Heart right ventricle (tissue), 16 donors: ENCODE measurements at regions of chr10 and their contacts with region 1.

Region 1: GRCh38 chr10:113108212-113108835 is 158.3 kb downstream of the TCF7L2 start:
- DNase-seq: peak in 1 of 2 donors; percentile 35
- ATAC-seq: peak in 2 of 8 donors; percentile 29 to 33
- H3K4me3 ChIP-seq: no peak overlapping the region
- H3K27ac ChIP-seq: no peak overlapping the region
- H3K4me1 ChIP-seq: peaks cover 0 to 33% (median 7%) of the 10 kb centered on the region in 9 donors
- H3K27me3 ChIP-seq: no peaks in the 10 kb centered on the region
- CTCF ChIP-seq: peak in 8 of 9 donors; percentile 29 to 64 (median 51)

Region 2: DNA sequence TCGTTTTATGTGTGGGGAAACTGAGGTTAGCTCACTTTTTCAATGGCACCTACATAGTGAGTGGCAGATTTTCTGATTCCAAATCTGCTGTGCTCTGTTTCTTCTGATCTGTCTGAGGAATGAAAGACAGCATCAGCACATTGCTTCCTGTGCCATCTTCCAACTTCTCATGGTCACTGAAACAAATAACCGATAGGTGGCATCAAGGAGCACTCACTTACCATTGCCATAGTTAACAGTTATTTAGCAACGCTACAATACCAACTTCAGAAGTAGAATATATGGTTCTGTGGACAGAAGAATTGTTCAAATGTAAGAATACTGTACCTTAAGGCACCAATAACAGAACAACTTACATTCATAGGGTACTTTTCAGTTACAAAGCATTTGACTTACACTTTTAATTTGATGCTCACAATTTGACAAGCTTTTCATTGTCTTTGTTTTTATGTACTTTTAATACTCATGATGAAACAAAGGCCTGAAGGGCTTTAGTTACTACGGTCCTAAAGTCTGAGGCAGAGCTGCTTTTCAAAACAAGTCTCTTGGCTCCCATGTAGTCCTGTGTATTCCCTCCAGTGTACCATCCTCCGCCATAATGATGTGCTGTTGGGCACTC is 387.1 kb before region 1 on chr10:
- intact Hi-C with region 1: loop called in 1 of 10 experiments (anchors 5 kb)
- DNase-seq: peak in 1 of 2 donors; percentile 34
- ATAC-seq: peak in 6 of 8 donors; percentile 29 to 59 (median 54)
- H3K4me3 ChIP-seq: no peak overlapping the region
- H3K27ac ChIP-seq: no peak overlapping the region
- H3K4me1 ChIP-seq: peaks cover 0 to 5% (median 0%) of the 10 kb centered on the region in 9 donors
- H3K27me3 ChIP-seq: no peaks in the 10 kb centered on the region
- CTCF ChIP-seq: peak; percentile 39 to 83 (median 71)